ENCODE measurements at regions of chr12 and their contacts with region 1.

Region 1: GRCh38 chr12:74431801-74432200 is 105.8 kb upstream of the ATXN7L3B start:
- DNase-seq: no peak
- H3K4me3 ChIP-seq: no peak overlapping the region
- H3K27ac ChIP-seq: no peak overlapping the region
- H3K4me1 ChIP-seq: no peaks in the 10 kb centered on the region
- H3K27me3 ChIP-seq: no peaks in the 10 kb centered on the region
- CTCF ChIP-seq: no peak
- POLR2A ChIP-seq: no peak

Region 2: DNA sequence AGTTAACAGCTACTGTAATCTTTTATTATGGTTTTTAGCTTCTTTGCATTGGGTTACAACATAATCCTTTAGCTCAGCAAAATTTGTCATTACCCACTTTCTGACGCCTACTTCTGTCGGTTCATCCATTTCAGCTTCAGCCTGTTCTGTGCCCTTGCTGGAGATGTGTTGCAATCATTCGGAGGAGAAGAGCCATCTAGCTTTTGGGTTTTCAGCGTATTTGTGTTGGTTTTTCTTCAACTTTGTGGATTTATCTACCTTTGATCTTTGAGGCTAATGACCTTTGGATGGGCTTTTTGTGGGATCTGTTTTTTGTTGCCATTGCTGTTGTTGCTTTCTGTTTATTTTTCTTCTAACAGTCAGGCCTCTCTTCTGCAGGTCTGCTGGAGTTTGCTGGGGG is 36.6 kb after region 1 on chr12:
- intact Hi-C with region 1: loop called (anchors 2 kb)
- DNase-seq: no peak
- H3K4me3 ChIP-seq: no peak overlapping the region
- H3K27ac ChIP-seq: no peak overlapping the region
- H3K4me1 ChIP-seq: no peaks in the 10 kb centered on the region
- H3K27me3 ChIP-seq: peaks cover 0 to 3% of the 10 kb centered on the region in 2 donors
- CTCF ChIP-seq: no peak
- POLR2A ChIP-seq: no peak

Measured in breast epithelium (tissue), 4 donors.